ENCODE measurements at regions of chr2 and their contacts with region 1.

Region 1: DNA sequence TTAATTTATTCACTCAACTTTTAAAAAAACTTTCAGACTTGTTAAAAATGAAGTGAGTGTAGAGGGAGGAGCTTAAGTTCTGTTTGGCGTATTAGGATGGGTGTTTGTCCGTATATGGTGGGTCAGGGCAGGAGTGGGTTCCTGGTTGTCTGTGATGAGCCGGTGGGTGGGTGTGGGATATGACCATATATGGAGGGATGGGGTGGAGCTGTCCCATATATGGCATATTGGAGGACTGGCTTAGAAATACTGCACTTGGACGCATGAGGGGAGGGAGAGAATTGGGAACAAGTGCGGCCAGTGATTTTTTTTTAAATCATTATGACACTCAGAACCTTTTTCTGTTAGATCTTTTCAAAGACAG is 1.5 kb downstream of the KDM3A start:
- DNase-seq: peak; percentile 64
- ATAC-seq: peak; percentile 85
- H3K4me3 ChIP-seq: peak overlapping the region; percentile 87 to 91
- H3K27ac ChIP-seq: peak overlapping the region; percentile 76
- H3K4me1 ChIP-seq: peaks cover 12% of the 10 kb centered on the region
- H3K27me3 ChIP-seq: no peaks in the 10 kb centered on the region
- CTCF ChIP-seq: no peak

Region 2: GRCh38 chr2:85956646-85957039 is 486.0 kb before region 1 on chr2:
- CTCF ChIA-PET with region 1: no interaction called
- POLR2A ChIA-PET with region 1: interaction called, 11 read pairs
- in situ Hi-C with region 1: no loop called
- intact Hi-C with region 1: no loop called
- DNase-seq: no peak
- ATAC-seq: no peak
- H3K4me3 ChIP-seq: no peak overlapping the region
- H3K27ac ChIP-seq: no peak overlapping the region
- H3K4me1 ChIP-seq: no peaks in the 10 kb centered on the region
- H3K27me3 ChIP-seq: no peaks in the 10 kb centered on the region
- CTCF ChIP-seq: no peak

Region 3: DNA sequence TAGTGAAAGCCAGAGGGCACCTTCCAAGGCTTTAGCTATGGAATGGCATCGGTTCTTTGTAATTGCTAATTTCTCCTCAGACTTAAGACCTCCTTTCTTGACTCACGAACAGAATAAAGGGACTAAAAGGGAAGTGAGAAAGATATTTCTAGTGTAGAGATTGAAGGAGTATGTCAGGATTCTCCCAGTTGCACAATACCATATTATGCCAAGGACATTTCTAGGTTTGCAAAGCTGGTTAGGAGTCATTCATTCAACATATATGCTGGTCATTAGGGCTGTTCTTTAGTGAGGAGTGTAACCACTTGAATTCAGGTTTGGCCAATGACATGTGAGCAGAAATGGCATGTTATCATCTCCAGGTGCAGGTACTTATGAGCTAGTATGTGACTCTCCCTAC is 112.6 kb before region 1 on chr2:
- CTCF ChIA-PET with region 1: no interaction called
- POLR2A ChIA-PET with region 1: interaction called, 14 read pairs
- in situ Hi-C with region 1: no loop called
- intact Hi-C with region 1: no loop called
- DNase-seq: no peak
- ATAC-seq: no peak
- H3K4me3 ChIP-seq: no peak overlapping the region
- H3K27ac ChIP-seq: no peak overlapping the region
- H3K4me1 ChIP-seq: no peaks in the 10 kb centered on the region
- H3K27me3 ChIP-seq: peaks cover 6% of the 10 kb centered on the region
- CTCF ChIP-seq: no peak

Region 4: DNA sequence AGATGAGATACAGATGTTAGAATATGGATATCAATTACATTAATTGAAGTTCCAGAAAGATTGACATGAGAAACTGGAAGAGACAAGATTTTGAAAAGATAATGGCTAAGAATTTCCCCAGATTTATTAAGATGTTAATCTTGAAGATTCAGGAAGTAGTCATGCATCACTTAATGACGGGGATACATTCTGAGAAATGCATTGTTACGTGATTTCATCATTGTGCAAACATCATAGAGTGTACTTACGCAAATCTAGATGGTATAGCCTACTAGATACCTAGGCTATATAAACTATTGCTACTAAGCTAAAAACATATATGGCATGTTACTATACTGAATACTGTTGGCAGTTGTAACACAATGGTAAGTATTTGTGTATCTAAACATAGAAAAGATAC is 127.4 kb after region 1 on chr2:
- CTCF ChIA-PET with region 1: no interaction called
- POLR2A ChIA-PET with region 1: interaction called, 10 read pairs
- in situ Hi-C with region 1: no loop called
- intact Hi-C with region 1: no loop called
- DNase-seq: no peak
- ATAC-seq: no peak
- H3K4me3 ChIP-seq: no peak overlapping the region
- H3K27ac ChIP-seq: no peak overlapping the region
- H3K4me1 ChIP-seq: no peaks in the 10 kb centered on the region; the same call in 1 of the 2 replicates
- H3K27me3 ChIP-seq: no peaks in the 10 kb centered on the region
- CTCF ChIP-seq: no peak

Region 5: DNA sequence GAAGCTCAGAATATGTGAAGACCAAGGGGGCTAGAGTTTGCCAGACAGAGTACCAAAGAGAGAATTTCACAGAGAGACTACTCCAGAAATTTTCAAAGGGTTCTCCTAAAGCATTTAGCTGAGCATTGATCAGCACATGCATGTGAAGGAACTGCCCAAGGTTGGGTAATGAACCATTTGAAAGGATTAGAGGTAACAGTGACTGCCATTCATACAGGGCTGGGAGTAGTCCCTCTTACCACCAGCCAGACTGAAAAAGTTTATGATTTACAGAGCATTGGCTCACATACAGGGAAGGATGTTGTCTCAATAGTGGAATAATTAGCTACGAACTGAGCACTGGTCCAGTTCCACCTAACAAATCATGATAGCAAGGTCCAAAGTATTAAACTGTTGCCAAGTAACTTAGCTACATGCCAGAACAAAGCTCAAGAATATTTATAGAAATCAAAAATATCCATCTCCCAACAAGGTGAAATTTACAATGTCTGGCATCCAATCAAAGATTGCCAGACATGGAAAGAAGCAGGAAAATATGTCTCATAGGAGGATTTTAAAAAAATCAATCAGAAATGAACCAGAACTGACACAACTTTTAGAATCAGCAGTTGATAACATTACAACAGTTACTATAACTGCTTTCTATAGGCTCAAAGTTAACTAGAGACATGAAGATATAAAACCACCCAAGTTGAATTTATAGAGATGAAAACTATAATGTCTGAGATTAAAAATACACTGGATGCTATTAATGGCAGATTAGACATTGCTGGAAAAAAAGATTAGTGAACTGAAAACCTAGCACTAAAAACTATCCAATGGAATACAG is 206.7 kb after region 1 on chr2:
- CTCF ChIA-PET with region 1: no interaction called
- POLR2A ChIA-PET with region 1: no interaction called
- in situ Hi-C with region 1: no loop called
- intact Hi-C with region 1: no loop called
- DNase-seq: no peak
- ATAC-seq: no peak
- H3K4me3 ChIP-seq: no peak overlapping the region
- H3K27ac ChIP-seq: no peak overlapping the region
- H3K4me1 ChIP-seq: no peaks in the 10 kb centered on the region
- H3K27me3 ChIP-seq: no peaks in the 10 kb centered on the region
- CTCF ChIP-seq: no peak